Activated CD8-positive, alpha-beta memory T cell treated with anti-CD3 and anti-CD28 coated beads, Interleukin-2, amount 10 ng/mL, durations not matched to agents 7 days and 5 days (primary cell): ENCODE measurements at regions of chr17 and their contacts with region 1.

Region 1: DNA sequence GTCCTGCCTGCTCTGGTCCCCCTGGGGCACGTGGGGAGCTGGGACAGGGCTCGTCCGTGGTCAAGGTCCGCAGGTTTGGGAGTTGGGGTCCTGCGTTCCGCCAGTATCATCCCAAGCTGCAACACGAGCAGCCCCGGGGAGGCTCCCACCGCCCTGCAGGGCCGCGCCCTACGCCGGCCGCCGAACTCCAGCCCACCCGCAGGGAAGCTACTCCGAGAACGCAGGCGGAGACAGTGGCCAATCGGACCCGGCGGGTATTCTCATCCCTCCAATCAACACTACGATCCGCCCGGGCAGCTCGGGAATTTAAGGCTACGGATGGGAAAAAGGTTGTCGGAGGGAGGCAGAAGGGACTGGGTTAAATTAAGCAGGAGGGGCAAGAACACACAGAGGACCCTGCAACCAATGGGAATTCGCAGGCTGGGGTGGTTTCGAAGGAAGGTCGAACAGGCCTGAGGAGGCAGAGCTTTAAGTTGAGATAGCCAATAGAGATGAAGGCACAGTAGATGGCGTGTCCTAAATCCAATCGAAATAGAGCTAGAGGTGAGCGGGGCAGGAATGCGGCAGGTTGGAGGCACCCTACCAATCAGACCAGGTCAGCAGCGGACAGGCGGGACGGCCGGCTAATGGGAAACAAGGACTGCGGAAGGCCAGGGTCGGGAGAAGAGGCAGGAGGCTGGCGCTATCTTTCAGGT is 626 bp downstream of the SPAG7 start:
- DNase-seq: peak; percentile 99
- ATAC-seq: peak; percentile 89
- H3K4me3 Mint-ChIP-seq: no peak overlapping the region
- H3K27ac Mint-ChIP-seq: no peak overlapping the region
- H3K4me1 Mint-ChIP-seq: peaks cover 36% of the 10 kb centered on the region
- H3K27me3 Mint-ChIP-seq: no peaks in the 10 kb centered on the region

Region 2: GRCh38 chr17:4939796-4940624 is 27.0 kb before region 1 on chr17 and contains the starts of genes RNF167 and SLC25A11:
- CTCF ChIA-PET with region 1: interaction called, 34 read pairs
- DNase-seq: peak; percentile 99
- ATAC-seq: peak; percentile 84
- H3K4me3 Mint-ChIP-seq: peak within 1 kb of the TSS; percentile 98
- H3K27ac Mint-ChIP-seq: peak within 1 kb of the TSS; percentile 92
- H3K4me1 Mint-ChIP-seq: peaks cover 61% of the 10 kb centered on the region
- H3K27me3 Mint-ChIP-seq: no peaks in the 10 kb centered on the region
- total RNA-seq, gene RNF167: 226 to 273 TPM
- total RNA-seq, gene SLC25A11: 82.3 to 84.6 TPM

Region 3: GRCh38 chr17:4948931-4949320 is 18.1 kb before region 1 on chr17:
- CTCF ChIA-PET with region 1: interaction called, 34 read pairs
- DNase-seq: peak; percentile 88
- ATAC-seq: peak; percentile 43
- H3K4me3 Mint-ChIP-seq: peak overlapping the region; percentile 98
- H3K27ac Mint-ChIP-seq: peak overlapping the region; percentile 100
- H3K4me1 Mint-ChIP-seq: peaks cover 39% of the 10 kb centered on the region
- H3K27me3 Mint-ChIP-seq: no peaks in the 10 kb centered on the region

Region 4: DNA sequence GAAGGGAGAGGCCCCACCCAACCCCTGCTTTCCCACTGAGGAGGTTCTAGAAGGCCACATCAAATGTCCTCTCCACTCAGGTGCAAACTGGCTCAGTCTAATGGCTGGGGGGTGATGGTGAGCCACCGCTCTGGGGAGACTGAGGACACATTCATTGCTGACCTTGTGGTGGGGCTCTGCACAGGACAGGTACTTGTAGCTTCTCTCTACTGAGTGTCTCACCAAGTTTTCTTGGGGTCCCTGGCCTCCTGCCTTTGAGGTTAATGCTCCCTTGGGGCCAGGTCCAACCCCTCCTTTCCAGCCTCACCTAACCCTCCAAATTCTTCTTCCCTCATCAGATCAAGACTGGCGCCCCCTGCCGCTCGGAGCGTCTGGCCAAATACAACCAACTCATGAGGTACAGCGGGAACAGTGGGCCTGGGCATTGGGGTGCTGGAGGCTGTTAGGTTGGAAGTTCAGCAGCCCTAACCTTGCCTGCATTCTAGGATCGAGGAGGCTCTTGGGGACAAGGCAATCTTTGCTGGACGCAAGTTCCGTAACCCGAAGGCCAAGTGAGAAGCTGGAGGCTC is 10.4 kb before region 1 on chr17:
- CTCF ChIA-PET with region 1: interaction called, 18 read pairs
- DNase-seq: no peak
- ATAC-seq: no peak
- H3K4me3 Mint-ChIP-seq: no peak overlapping the region
- H3K27ac Mint-ChIP-seq: no peak overlapping the region
- H3K4me1 Mint-ChIP-seq: peaks cover under 1% of the 10 kb centered on the region
- H3K27me3 Mint-ChIP-seq: no peaks in the 10 kb centered on the region

Region 5: GRCh38 chr17:5003214-5003867 is 36.4 kb after region 1 on chr17:
- CTCF ChIA-PET with region 1: no interaction called
- DNase-seq: no peak
- ATAC-seq: no peak
- H3K4me3 Mint-ChIP-seq: no peak overlapping the region
- H3K27ac Mint-ChIP-seq: no peak overlapping the region
- H3K4me1 Mint-ChIP-seq: peaks cover 10% of the 10 kb centered on the region
- H3K27me3 Mint-ChIP-seq: no peaks in the 10 kb centered on the region